ENCODE measurements at regions of chr15 and their contacts with region 1.

Region 1: GRCh38 chr15:48285329-48286214 is 45.7 kb upstream of the DUT start:
- DNase-seq: no peak

Region 2: DNA sequence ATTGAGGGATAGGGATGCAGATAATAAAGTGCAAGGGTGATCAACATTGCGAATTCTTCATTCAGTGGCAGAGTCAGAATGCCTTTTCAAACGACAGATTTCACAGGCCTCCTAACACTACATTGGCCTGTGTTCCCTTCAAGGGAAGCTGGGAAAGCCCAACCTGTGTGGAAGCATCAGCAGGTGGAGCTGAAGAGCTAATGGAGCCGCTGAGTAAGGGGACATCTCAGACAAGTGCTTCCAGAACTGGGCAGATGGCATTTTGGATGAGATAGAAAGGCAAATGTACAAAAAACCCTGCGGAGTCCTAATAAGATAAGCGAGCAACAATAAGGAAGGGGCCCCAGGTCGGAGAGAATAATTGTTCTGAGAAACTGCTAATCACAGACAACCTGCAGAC is 173.3 kb before region 1 on chr15:
- intact Hi-C with region 1: loop called (anchors 10 kb)
- DNase-seq: no peak

Region 3: DNA sequence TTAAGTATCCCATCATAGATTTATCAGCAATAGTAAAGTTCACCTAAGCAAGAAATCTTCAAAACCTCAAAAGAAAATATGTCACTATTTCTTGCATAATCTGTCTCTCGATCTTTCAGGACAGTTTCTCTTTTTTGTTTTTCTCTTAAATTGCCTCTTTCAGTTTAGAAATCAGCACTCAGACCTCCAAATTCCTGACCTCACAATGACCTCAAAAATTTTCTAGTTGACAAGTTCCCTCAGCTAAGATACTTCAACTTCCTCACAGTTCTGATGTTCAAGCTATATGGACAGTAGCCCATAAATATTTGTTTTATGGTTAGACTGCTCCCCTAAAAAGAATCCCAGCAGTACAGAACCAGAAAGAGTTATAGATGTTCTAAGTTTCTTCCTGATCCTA is 140.7 kb before region 1 on chr15:
- intact Hi-C with region 1: no loop called
- DNase-seq: no peak

Region 4: GRCh38 chr15:48177766-48178647 is 107.6 kb before region 1 on chr15 and contains the start of gene MYEF2:
- intact Hi-C with region 1: loop called (anchors 10 kb)
- DNase-seq: peak; percentile 77
- total RNA-seq, gene MYEF2: 25.5 TPM

Region 5: DNA sequence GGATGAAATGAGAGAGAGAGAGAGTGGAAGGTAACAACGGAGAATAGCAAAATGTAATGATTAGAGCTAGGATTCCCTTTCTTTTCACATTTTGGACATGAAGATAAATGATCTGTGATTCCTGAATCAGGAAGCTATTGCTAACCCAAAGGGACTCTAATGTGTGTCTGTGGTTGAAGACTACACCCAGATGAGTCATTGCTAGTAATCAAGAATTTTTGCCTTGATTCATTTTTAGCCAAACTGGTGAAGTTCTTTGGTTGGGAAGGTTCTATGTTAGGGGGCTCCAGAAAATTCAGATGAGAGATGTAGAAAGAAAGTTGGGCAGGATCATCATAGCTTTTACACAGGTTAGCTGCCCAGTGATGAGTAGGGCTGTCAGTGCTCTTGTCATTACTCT is 162.1 kb after region 1 on chr15:
- intact Hi-C with region 1: no loop called
- DNase-seq: no peak